Natural killer cell (primary cell): ENCODE measurements at regions of chr20 and their contacts with region 1.

Region 1: DNA sequence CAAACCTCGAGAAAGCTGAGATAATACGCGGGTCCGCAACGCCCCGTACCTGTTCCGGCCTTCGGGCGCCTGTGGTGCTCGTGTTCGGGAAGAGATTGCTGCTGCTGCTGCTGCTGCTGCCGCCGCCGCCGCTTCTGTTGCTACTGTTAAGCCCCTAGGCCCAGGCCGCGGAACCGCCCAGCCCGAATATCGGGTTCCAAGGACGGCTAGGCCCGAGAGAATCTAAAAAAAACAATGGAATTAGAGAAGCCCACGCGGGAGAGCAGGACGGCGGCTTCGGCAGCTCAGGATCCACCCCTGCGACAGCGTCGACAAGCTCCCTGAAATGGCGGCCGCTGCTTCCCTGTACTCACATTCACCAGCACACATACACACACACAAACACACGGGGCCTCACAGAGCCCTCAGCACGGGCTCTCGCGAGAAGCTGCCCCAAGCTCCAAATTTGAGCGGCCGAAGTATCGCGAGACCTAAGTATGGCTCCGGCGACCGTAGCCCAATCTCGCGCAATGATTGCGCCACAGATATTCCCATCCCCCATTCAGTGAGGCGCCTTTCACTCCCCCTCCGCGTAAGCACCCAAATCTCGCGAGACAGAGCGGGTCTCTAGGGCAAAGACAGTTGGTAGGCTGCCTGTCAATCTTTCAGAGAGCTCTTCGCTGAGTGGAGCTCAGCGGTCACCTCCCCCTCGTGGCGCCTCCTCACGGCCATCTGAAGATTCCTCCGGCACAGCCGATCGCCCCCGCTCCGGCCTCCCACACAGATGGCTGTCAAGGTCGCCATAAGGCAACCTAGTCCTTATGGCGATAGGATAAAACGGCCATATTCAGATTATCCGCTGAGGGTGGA is at the start of gene RBM39:
- DNase-seq: peak; percentile 97 to 100
- ATAC-seq: peak; percentile 75 to 94 (median 83)
- H3K4me3 ChIP-seq: peak within 1 kb of the TSS; percentile 98
- H3K4me3 Mint-ChIP-seq: peak within 1 kb of the TSS; percentile 99
- H3K27ac ChIP-seq: peak within 1 kb of the TSS; percentile 99
- H3K27ac Mint-ChIP-seq: peak within 1 kb of the TSS; percentile 98 to 99
- H3K4me1 ChIP-seq: peaks cover 41% of the 10 kb centered on the region
- H3K4me1 Mint-ChIP-seq: peaks cover 57 to 59% of the 10 kb centered on the region in 2 donors
- H3K27me3 ChIP-seq: no peaks in the 10 kb centered on the region
- H3K27me3 Mint-ChIP-seq: no peaks in the 10 kb centered on the region
- CTCF ChIP-seq: peak; percentile 23
- total RNA-seq, gene RBM39: 1,431 to 1,555 (median 1,445) TPM

Region 2: DNA sequence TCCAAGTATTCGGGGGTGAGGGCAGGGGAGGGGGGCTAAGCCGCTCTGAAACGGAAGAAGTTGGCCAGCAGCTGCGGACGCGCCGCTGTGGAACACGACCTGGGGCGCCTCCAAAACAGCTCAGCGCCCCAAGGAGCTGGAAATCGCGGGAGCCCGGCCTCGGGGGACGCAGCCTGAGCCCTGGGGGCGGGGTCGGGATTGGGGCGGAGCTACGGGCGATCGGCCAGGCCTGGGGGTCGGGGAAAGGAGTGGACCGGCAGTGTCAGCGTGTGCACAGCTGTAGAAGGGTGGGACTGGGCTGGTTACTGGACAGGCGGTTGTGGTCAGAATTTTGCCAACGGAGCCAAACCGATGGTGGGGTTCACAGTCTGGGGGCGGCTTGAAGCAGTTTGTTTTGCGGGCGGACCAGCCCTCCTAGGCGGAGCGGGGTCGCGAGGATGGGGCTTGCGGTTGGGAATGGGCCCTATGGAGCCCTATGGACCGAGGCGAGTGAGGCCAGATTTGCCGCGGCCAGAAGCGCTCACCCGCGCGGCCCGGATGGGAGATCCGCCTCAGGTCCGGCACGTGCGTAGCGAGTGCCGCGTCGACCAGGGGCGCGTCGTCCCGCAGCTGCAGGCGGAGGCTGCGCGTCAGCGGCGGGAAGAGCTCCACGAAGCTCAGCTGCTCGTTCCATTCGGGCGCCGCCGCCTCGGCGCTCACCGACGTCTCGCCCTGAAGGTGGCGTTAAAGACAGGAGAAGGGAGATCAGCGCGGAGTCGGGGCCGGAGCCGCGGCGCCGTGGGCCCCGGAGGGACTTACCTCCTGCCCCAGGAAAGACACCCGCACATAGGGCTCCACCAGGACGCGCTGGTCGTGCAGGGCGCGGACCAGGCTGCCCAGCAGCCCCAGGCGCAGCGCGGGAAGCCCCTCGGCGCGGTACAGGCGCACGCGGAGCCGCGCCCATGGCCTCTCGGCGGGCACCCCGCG is 140.8 kb before region 1 on chr20:
- intact Hi-C with region 1: loop called (anchors 5 kb)
- DNase-seq: peak; percentile 61 to 91
- ATAC-seq: peak; percentile 83 to 88 (median 86)
- H3K4me3 ChIP-seq: peak overlapping the region; percentile 48
- H3K4me3 Mint-ChIP-seq: peak overlapping the region; percentile 76
- H3K27ac ChIP-seq: no peak overlapping the region
- H3K27ac Mint-ChIP-seq: peak overlapping the region in 1 of 2 donors; percentile 75
- H3K4me1 ChIP-seq: peaks cover 19% of the 10 kb centered on the region
- H3K4me1 Mint-ChIP-seq: peaks cover 0 to 12% of the 10 kb centered on the region in 2 donors
- H3K27me3 ChIP-seq: peaks cover 20% of the 10 kb centered on the region
- H3K27me3 Mint-ChIP-seq: peaks cover 24 to 37% of the 10 kb centered on the region in 2 donors
- CTCF ChIP-seq: peak; percentile 45

Region 3: GRCh38 chr20:35664544-35665221 is 77.4 kb before region 1 on chr20 and contains the starts of genes CPNE1 and RBM12:
- intact Hi-C with region 1: loop called (anchors 1 kb)
- DNase-seq: peak; percentile 93 to 98
- ATAC-seq: peak; percentile 68 to 87 (median 80)
- H3K4me3 ChIP-seq: peak within 1 kb of the TSS; percentile 81
- H3K4me3 Mint-ChIP-seq: peak within 1 kb of the TSS; percentile 96
- H3K27ac ChIP-seq: peak within 1 kb of the TSS; percentile 97
- H3K27ac Mint-ChIP-seq: peak within 1 kb of the TSS in 1 of 2 donors; percentile 100
- H3K4me1 ChIP-seq: peaks cover 22% of the 10 kb centered on the region
- H3K4me1 Mint-ChIP-seq: peaks cover 55% of the 10 kb centered on the region in 2 donors
- H3K27me3 ChIP-seq: no peaks in the 10 kb centered on the region
- H3K27me3 Mint-ChIP-seq: no peaks in the 10 kb centered on the region
- CTCF ChIP-seq: no peak
- total RNA-seq, gene CPNE1: 298 to 342 (median 334) TPM
- total RNA-seq, gene RBM12: 80.9 to 112 (median 89.4) TPM

Region 4: DNA sequence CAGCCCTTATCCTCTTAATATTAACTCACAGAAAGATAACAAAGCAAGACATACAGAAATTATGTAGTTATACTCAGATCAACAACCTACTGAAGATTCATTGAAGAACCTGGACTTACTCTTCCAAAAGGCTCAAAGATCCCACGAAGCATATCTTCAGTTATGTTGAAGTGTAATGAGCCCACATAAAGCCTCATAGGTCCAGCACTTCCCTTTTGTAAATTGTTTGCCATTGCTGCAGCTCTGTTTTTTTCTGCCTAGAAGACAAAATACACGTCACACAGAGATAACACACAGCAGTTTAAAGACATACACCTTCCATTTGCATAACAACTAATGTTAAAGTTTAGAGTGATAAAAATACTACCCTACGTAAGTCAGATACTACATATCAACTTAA is 20.5 kb before region 1 on chr20:
- intact Hi-C with region 1: loop called (anchors 2 kb)
- DNase-seq: no peak
- ATAC-seq: no peak
- H3K4me3 ChIP-seq: no peak overlapping the region
- H3K4me3 Mint-ChIP-seq: peak overlapping the region; percentile 51
- H3K27ac ChIP-seq: no peak overlapping the region
- H3K27ac Mint-ChIP-seq: peak overlapping the region; percentile 83 to 86
- H3K4me1 ChIP-seq: peaks cover 20% of the 10 kb centered on the region
- H3K4me1 Mint-ChIP-seq: peaks cover 40 to 42% of the 10 kb centered on the region in 2 donors
- H3K27me3 ChIP-seq: no peaks in the 10 kb centered on the region
- H3K27me3 Mint-ChIP-seq: no peaks in the 10 kb centered on the region
- CTCF ChIP-seq: no peak

Region 5: DNA sequence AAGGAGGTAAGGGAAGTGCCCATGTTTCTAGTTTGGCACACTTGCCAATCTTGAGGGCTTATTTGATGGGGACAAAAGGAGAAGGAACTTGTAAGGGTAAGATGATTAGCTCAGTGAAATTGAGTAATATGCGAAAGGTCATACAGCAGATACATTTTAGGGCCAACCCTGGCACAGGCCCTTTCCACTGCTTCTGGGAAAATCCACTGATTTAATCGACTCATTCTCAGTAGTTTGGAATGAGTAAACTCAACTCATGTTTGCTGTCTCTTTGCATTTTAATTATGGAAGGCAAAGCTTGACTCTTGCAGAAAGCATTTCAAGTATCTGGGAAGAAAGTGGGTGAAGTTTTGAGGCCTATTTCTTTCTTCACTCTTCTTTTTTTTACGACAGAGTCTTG is 49.7 kb after region 1 on chr20:
- intact Hi-C with region 1: no loop called
- DNase-seq: no peak
- ATAC-seq: peak in 1 of 3 donors; percentile 31
- H3K4me3 ChIP-seq: no peak overlapping the region
- H3K4me3 Mint-ChIP-seq: no peak overlapping the region
- H3K27ac ChIP-seq: no peak overlapping the region
- H3K27ac Mint-ChIP-seq: peak overlapping the region; percentile 7 to 51
- H3K4me1 ChIP-seq: peaks cover 10% of the 10 kb centered on the region
- H3K4me1 Mint-ChIP-seq: peaks cover 23 to 29% of the 10 kb centered on the region in 2 donors
- H3K27me3 ChIP-seq: no peaks in the 10 kb centered on the region
- H3K27me3 Mint-ChIP-seq: no peaks in the 10 kb centered on the region
- CTCF ChIP-seq: no peak

Region 6: DNA sequence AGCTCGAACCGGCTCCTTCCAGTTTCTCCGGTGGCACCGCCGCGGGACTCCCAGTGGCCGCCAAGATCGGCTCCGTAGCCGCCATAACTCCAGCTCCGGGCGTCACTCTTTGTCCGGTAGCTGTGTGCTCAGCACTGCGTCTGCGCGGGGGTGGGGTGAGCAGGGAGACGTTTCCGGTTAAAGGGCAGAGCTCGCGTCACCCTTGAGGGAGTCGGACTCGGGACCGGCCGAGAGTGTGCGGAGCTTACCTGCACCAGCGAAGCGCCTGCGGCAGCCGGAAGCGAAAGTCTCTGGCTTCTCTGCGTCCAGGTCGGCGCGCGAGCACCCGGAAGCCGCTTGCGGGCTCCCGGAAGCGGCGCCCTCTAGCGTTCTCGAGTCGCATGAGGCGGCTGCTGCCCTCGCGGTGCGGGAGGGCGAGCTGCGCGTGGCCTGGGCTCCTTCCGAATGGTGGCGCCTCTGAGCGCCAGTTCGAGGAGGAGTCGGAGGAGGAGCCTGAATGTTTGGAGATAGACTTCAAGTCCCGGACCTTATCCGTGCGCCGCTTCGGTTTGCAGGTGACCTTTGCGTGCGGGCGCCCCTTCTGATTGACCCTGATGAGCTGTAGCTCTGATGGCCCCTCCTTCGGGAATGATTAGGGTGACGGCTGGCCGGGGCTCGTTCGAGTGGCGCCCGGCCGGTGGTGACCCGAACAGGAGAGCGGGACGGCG is 212.2 kb after region 1 on chr20 and contains the start of gene SCAND1:
- intact Hi-C with region 1: loop called (anchors 5 kb)
- DNase-seq: peak; percentile 95 to 99
- ATAC-seq: peak; percentile 85 to 95 (median 85)
- H3K4me3 ChIP-seq: peak within 1 kb of the TSS; percentile 97
- H3K4me3 Mint-ChIP-seq: peak within 1 kb of the TSS; percentile 99
- H3K27ac ChIP-seq: peak within 1 kb of the TSS; percentile 100
- H3K27ac Mint-ChIP-seq: peak within 1 kb of the TSS; percentile 98 to 100
- H3K4me1 ChIP-seq: peaks cover 18% of the 10 kb centered on the region
- H3K4me1 Mint-ChIP-seq: peaks cover 17 to 25% of the 10 kb centered on the region in 2 donors
- H3K27me3 ChIP-seq: no peaks in the 10 kb centered on the region
- H3K27me3 Mint-ChIP-seq: no peaks in the 10 kb centered on the region
- CTCF ChIP-seq: peak; percentile 96
- total RNA-seq, gene SCAND1: 51.4 to 70.3 (median 63.9) TPM